IMR-90 (cell line): ENCODE measurements at regions of chr22 and their contacts with region 1.

Region 1: DNA sequence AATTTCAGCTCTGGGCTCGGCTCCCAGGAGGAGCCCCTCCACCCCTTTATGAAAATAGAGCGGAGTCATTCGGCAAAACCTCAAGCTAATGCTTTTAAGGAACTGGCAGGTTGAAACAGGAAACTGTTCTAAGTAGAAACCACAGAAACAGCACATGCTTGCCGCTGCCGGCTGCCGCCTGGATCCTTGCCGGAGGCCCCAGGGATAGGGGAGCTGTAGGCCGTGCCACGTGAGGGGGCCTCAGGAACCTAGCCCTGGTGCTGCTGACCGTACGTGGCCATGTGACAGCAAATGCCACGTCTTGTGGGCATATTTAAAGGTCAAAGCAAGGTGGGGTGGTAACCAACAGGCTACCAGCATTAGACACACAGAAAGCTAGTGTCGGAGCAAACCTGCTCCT is 77.9 kb upstream of the TIMP3 start:
- DNase-seq: peak; percentile 96
- ATAC-seq: peak; percentile 96
- H3K4me3 ChIP-seq: no peak overlapping the region
- H3K27ac ChIP-seq: peak overlapping the region; percentile 69
- H3K4me1 ChIP-seq: peaks cover 17% of the 10 kb centered on the region
- H3K27me3 ChIP-seq: no peaks in the 10 kb centered on the region
- CTCF ChIP-seq: no peak
- POLR2A ChIP-seq: no peak
- RAD21 ChIP-seq: no peak; the same call in 1 of the 2 replicates

Region 2: GRCh38 chr22:32684822-32685187 is 38.8 kb before region 1 on chr22:
- CTCF ChIA-PET with region 1: no interaction called
- POLR2A ChIA-PET with region 1: no interaction called
- dilution Hi-C with region 1: no loop called
- in situ Hi-C with region 1: no loop called
- intact Hi-C with region 1: loop called (anchors 5 kb)
- DNase-seq: peak; percentile 71
- ATAC-seq: peak; percentile 78
- H3K4me3 ChIP-seq: no peak overlapping the region
- H3K27ac ChIP-seq: 0 out of 2 replicates have a peak overlapping the region, but pooled peaks have one; percentile 10
- H3K4me1 ChIP-seq: peaks cover 2% of the 10 kb centered on the region; the same call in 1 of the 2 replicates
- H3K27me3 ChIP-seq: no peaks in the 10 kb centered on the region; the same call in 1 of the 2 replicates
- CTCF ChIP-seq: no peak
- POLR2A ChIP-seq: no peak
- RAD21 ChIP-seq: no peak